Heart left ventricle (tissue), 16 donors: ENCODE measurements at regions of chr14 and their contacts with region 1.

Region 1: DNA sequence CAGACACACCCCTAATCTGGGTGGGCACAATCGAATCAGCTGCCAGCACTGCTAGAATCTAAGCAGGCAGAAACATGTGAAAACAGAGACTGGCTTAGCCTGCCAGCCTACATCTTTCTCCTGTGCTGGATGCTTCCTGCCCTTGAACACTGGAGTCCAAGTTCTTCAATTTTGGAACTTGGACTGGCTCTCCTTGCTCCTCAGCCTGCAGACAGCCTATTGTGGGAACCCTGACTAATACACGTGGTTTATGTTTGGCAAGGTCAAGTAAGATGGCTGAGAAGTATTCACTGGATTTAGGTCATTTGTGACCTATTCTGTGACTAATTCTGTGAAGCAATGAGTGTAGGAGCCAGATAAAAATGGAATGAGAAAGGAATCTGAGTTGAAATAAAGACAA is 11.0 kb downstream of the GPR135 start:
- DNase-seq: peak in 2 of 5 donors; percentile 15 to 34
- ATAC-seq: peak; percentile 67 to 96 (median 90)
- H3K4me3 ChIP-seq: no peak overlapping the region
- H3K27ac ChIP-seq: peak overlapping the region in 4 of 12 donors; percentile 38 to 49 (median 42)
- H3K4me1 ChIP-seq: peaks cover 0 to 5% (median 0%) of the 10 kb centered on the region in 12 donors
- H3K27me3 ChIP-seq: no peaks in the 10 kb centered on the region
- CTCF ChIP-seq: no peak
- POLR2A ChIP-seq: no peak

Region 2: GRCh38 chr14:58659846-58660245 is 794.3 kb before region 1 on chr14:
- intact Hi-C with region 1: no loop called
- DNase-seq: peak; percentile 57 to 68 (median 64)
- ATAC-seq: peak in 3 of 4 donors; percentile 73 to 81 (median 77)
- H3K4me3 ChIP-seq: no peak overlapping the region
- H3K27ac ChIP-seq: peak overlapping the region in 4 of 12 donors; percentile 8 to 41 (median 30)
- H3K4me1 ChIP-seq: peaks cover 0 to 26% (median 4%) of the 10 kb centered on the region in 12 donors
- H3K27me3 ChIP-seq: no peaks in the 10 kb centered on the region
- CTCF ChIP-seq: no peak
- POLR2A ChIP-seq: no peak

Region 3: GRCh38 chr14:59028476-59029202 is 425.5 kb before region 1 on chr14:
- intact Hi-C with region 1: loop called in 2 of 10 experiments (anchors 10 kb)
- DNase-seq: peak in 4 of 5 donors; percentile 35 to 62 (median 51)
- ATAC-seq: peak in 3 of 4 donors; percentile 74 to 92 (median 86)
- H3K4me3 ChIP-seq: no peak overlapping the region
- H3K27ac ChIP-seq: no peak overlapping the region
- H3K4me1 ChIP-seq: peaks cover 0 to 10% (median 0%) of the 10 kb centered on the region in 12 donors
- H3K27me3 ChIP-seq: no peaks in the 10 kb centered on the region
- CTCF ChIP-seq: peak; percentile 60 to 81 (median 72)
- POLR2A ChIP-seq: no peak

Region 4: DNA sequence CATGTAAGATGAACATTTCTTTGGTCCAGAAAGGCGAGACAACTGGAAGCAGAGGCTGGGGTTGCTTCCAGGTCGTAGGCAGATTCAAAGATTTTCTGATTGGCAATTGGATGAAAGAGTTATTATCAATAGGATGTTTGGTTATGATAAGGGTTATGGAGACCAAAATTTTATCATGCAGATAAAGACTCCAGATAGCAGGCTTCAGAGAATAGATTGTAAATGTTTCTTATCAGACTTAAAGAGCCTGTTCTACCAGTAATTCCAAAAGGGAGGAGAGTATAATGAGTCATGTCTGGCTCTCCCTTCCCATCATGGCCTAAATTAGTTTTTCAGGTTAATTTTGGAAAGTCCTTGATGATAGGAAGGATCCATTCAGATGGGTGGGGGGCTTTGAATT is 976.1 kb after region 1 on chr14:
- intact Hi-C with region 1: no loop called
- DNase-seq: no peak
- ATAC-seq: no peak
- H3K4me3 ChIP-seq: no peak overlapping the region
- H3K27ac ChIP-seq: no peak overlapping the region
- H3K4me1 ChIP-seq: no peaks in the 10 kb centered on the region
- H3K27me3 ChIP-seq: no peaks in the 10 kb centered on the region
- CTCF ChIP-seq: no peak
- POLR2A ChIP-seq: no peak